Right ventricle myocardium superior (tissue), 1 donor: ENCODE measurements at regions of chr2 and their contacts with region 1.

Region 1: GRCh38 chr2:218223046-218223445 is 6.1 kb downstream of the ARPC2 start:
- DNase-seq: no peak
- ATAC-seq: no peak

Region 2: DNA sequence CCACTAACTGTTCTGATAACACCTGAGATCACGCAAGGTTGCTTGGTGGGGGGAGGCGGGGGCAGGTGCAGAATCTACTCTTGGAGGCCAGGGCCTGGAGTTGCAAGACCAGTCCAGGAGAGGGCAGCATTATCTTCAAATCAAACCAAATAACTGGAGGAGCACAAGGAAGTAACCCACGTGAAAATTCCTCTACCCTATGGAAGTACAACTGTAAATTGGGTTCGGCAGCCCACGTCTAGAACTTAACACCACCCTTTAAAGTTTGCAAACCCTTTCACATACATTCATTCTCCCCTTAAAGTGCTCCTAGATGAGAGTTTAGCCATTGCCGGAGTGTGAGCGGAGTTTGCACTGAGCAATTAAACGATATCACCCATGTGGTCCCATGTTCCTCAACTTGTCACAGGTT is 36.7 kb before region 1 on chr2:
- intact Hi-C with region 1: no loop called
- DNase-seq: peak; percentile 72
- ATAC-seq: peak; percentile 95

Region 3: GRCh38 chr2:218257390-218257981 is 34.4 kb after region 1 on chr2:
- intact Hi-C with region 1: loop called (anchors 5 kb)
- DNase-seq: no peak
- ATAC-seq: peak; percentile 3